B cell (primary cell): ENCODE measurements at regions of chr7 and their contacts with region 1.

Region 1: DNA sequence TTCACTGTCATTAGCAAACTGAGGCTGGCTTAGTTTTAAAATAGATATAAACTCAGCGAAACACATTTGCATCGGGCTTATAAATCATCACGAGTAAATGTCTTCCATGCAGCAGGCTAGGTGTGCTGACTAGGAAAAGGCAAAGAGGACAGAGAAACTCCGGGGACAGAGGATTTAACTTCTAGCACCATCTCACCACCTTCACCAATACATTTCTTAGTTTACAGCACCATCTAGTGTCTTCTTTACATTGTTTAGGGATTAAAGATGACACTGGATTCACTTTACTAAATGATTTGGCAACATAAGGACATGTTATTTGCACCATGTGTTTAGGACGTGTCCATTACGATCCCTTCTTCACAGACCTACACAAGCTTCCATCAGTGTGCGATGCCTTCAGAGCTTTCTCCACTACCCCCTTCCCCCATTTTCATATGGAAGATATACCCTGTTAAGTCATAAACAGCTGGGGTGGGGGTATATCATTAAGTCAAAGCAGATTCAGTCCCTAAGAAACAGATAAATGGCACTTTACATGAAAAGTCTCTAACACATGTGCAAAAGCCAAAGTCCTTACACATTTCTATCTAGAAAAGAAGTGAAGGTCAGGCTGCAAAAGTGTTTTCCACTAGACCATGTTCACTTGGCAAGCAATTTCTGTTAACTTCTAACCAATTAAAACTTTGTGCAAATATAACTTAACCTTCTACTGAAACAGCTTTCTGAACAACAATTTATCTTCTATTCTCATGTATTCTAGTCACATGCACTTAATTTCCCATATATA is 103.3 kb downstream of the GRB10 start:
- DNase-seq: peak; percentile 66
- ATAC-seq: no peak
- H3K4me3 ChIP-seq: no peak overlapping the region
- H3K4me3 Mint-ChIP-seq: no peak overlapping the region
- H3K27ac ChIP-seq: no peak overlapping the region
- H3K27ac Mint-ChIP-seq: no peak overlapping the region
- H3K4me1 ChIP-seq: peaks cover 8 to 10% of the 10 kb centered on the region in 2 donors
- H3K4me1 Mint-ChIP-seq: peaks cover 5% of the 10 kb centered on the region
- H3K27me3 ChIP-seq: no peaks in the 10 kb centered on the region
- H3K27me3 Mint-ChIP-seq: peaks cover 22% of the 10 kb centered on the region
- CTCF ChIP-seq: peak; percentile 73

Region 2: GRCh38 chr7:50119815-50120637 is 559.4 kb before region 1 on chr7:
- CTCF ChIA-PET with region 1: interaction called, 8 read pairs
- POLR2A ChIA-PET with region 1: no interaction called
- intact Hi-C with region 1: loop called (anchors 5 kb)
- DNase-seq: peak; percentile 57
- ATAC-seq: peak; percentile 83
- H3K4me3 ChIP-seq: no peak overlapping the region
- H3K4me3 Mint-ChIP-seq: peak overlapping the region; percentile 26
- H3K27ac ChIP-seq: peak overlapping the region in 1 of 2 donors; percentile 60
- H3K27ac Mint-ChIP-seq: no peak overlapping the region
- H3K4me1 ChIP-seq: peaks cover 20 to 21% of the 10 kb centered on the region in 2 donors
- H3K4me1 Mint-ChIP-seq: peaks cover 22% of the 10 kb centered on the region
- H3K27me3 ChIP-seq: no peaks in the 10 kb centered on the region
- H3K27me3 Mint-ChIP-seq: no peaks in the 10 kb centered on the region
- CTCF ChIP-seq: peak; percentile 69

Region 3: GRCh38 chr7:50142425-50143017 is 536.9 kb before region 1 on chr7:
- CTCF ChIA-PET with region 1: interaction called, 11 read pairs
- POLR2A ChIA-PET with region 1: no interaction called
- intact Hi-C with region 1: loop called (anchors 2 kb)
- DNase-seq: peak; percentile 71
- ATAC-seq: peak; percentile 71
- H3K4me3 ChIP-seq: peak overlapping the region in 4 of 5 experiments; percentile 8 to 33 (median 30)
- H3K4me3 Mint-ChIP-seq: peak overlapping the region; percentile 80
- H3K27ac ChIP-seq: peak overlapping the region in 1 of 2 donors; percentile 62
- H3K27ac Mint-ChIP-seq: peak overlapping the region; percentile 62
- H3K4me1 ChIP-seq: peaks cover 42 to 50% of the 10 kb centered on the region in 2 donors
- H3K4me1 Mint-ChIP-seq: peaks cover 49% of the 10 kb centered on the region
- H3K27me3 ChIP-seq: no peaks in the 10 kb centered on the region
- H3K27me3 Mint-ChIP-seq: no peaks in the 10 kb centered on the region
- CTCF ChIP-seq: peak; percentile 94

Region 4: DNA sequence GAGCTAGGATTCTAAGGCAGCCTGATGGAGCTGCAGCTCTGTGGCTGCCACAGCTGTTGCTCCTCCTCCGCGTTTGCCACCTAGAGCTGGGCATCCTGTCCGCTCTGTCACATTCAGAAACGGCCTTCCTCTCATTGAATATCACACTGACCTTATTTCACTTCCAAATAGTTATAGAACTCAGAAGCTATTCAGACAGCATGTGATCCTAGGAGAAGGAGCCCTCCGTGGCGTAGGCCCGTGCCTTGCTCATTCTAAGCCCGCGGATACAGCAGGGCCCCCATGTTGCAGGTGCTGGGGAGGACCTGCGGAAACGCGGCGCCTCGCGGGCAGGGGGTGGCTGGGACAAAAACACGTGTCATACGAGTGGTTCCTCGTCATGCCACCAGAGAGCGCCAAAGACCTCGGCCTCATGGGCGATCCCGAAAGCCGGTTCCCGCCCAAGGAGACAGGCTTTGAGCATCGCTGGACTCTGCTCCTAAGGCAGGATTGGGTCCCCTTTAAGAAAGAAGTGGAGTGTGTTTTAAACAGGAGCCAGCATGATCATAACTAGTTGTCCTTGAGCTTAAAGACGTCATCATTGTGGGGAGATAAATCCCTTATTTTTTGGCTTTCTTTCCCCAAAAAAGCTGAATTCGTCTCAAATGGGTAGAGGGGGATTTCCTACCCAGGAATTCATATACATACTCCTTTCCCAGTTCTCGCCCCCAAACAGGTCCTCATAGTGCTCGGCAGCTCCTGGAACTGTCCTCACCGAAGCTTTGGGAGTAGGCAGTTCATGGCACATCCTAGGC is 211.4 kb before region 1 on chr7:
- CTCF ChIA-PET with region 1: interaction called, 13 read pairs
- POLR2A ChIA-PET with region 1: no interaction called
- intact Hi-C with region 1: loop called (anchors 1 kb)
- DNase-seq: peak; percentile 79
- ATAC-seq: peak; percentile 94
- H3K4me3 ChIP-seq: peak overlapping the region in 3 of 5 experiments; percentile 7 to 56 (median 34)
- H3K4me3 Mint-ChIP-seq: peak overlapping the region; percentile 54
- H3K27ac ChIP-seq: no peak overlapping the region
- H3K27ac Mint-ChIP-seq: no peak overlapping the region
- H3K4me1 ChIP-seq: peaks cover 9 to 10% of the 10 kb centered on the region in 2 donors
- H3K4me1 Mint-ChIP-seq: peaks cover 9% of the 10 kb centered on the region
- H3K27me3 ChIP-seq: no peaks in the 10 kb centered on the region
- H3K27me3 Mint-ChIP-seq: peaks cover 5% of the 10 kb centered on the region
- CTCF ChIP-seq: peak; percentile 81

Region 5: GRCh38 chr7:50626286-50626685 is 53.1 kb before region 1 on chr7:
- CTCF ChIA-PET with region 1: no interaction called
- POLR2A ChIA-PET with region 1: no interaction called
- intact Hi-C with region 1: no loop called
- DNase-seq: no peak
- ATAC-seq: no peak
- H3K4me3 ChIP-seq: no peak overlapping the region
- H3K4me3 Mint-ChIP-seq: no peak overlapping the region
- H3K27ac ChIP-seq: no peak overlapping the region
- H3K27ac Mint-ChIP-seq: no peak overlapping the region
- H3K4me1 ChIP-seq: peaks cover 0 to 6% of the 10 kb centered on the region in 2 donors
- H3K4me1 Mint-ChIP-seq: peaks cover 12% of the 10 kb centered on the region
- H3K27me3 ChIP-seq: no peaks in the 10 kb centered on the region
- H3K27me3 Mint-ChIP-seq: peaks cover 3% of the 10 kb centered on the region
- CTCF ChIP-seq: no peak